ENCODE measurements at regions of chr10 and their contacts with region 1.

Region 1: DNA sequence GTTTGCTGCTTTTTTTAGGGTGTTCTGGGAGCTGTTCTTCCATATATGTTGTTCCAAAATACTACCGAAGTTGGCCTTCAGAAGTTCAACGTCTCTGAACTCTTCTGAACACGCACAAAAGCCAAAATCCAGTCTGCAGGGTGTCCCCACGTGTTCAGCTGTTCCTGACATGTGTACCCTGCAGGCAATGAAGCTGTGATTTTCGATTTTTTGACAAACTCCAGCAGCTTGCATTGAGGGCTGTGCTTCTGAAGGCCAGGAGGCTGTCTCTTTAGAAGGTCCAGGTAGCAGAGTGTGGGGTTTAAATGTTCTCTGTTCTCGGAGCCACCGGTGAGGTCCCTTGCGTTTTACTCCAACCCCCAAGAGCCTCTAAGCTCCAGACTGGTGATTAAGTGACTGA is 145.0 kb downstream of the PRPF18 start:
- DNase-seq: no peak

Region 2: DNA sequence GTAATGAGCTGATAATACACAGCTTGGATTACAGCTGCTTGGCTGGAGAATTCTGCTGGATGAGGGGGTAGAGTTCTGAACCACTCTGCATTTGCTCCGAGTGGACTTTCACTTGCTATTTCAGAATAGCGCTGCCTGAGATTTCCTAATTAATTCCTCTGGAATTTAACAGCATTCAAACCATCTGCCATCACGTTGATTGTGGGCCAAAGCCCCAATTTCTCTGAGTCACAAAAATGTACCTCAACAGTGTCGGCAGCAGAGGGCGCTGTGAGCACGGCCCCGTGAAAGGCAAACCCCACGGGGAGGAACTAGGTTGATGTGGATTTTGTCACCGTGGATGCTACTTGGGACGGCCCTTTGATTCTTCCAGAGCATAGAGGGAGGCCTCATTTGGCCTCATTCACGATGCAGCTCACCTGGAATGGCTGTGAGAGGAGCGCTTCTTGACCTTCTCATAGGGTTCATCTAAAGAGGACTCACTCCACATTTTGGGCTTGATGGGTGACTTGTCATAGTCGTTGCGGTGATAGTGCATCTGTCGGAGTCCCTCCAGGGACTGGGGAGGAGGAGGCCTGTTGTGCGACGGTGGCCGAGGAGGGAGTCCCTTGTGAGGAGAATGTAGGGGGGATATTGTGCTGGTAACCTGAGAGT is 71.8 kb before region 1 on chr10:
- CTCF ChIA-PET with region 1: interaction called, 10 read pairs
- POLR2A ChIA-PET with region 1: no interaction called
- DNase-seq: peak; percentile 71

Region 3: GRCh38 chr10:13707156-13707881 is 24.5 kb before region 1 on chr10:
- CTCF ChIA-PET with region 1: no interaction called
- POLR2A ChIA-PET with region 1: no interaction called
- DNase-seq: peak; percentile 59

Measured in HEK293T (cell line).